Mammary epithelial cell (primary cell): ENCODE measurements at regions of chr18 and their contacts with region 1.

Region 1: DNA sequence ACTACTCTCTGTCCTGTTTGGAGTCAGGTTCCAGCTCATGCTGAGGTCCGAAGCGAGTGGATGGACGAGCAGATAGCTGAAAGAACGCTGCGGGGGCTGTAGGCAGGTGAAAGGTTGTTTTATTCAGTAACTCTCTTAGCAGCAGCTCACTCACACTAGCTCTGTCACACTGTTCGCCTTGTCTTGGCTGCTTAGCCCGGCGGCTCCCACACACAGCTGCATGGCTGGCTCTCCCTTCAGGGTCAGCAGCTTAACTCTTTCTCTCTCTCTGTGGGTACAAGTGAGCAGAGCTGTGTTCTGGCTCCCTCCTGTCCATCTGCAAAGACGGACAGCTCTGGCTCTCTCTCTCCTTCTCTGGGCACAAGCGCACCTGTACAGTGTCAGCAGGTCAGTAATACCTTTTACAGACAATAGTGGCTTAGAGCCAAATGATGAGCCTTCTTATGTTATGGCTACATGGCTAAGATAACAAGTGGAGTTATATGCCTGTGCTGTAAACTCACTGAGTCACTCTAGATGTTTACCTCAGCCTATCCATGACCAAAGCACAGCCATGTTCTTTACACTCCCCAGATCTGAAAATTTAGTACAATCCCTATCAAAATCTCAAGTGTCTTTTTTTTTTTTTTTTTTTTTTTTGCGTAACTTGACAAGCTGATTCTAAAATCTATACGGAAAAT is 149.3 kb downstream of the GALNT1 start:
- DNase-seq: no peak
- H3K4me3 ChIP-seq: peak overlapping the region; percentile 25 to 43 (median 27)
- H3K27ac ChIP-seq: no peak overlapping the region
- H3K4me1 ChIP-seq: no peaks in the 10 kb centered on the region
- H3K27me3 ChIP-seq: no peaks in the 10 kb centered on the region
- CTCF ChIP-seq: no peak

Region 2: GRCh38 chr18:35386600-35387351 is 344.1 kb before region 1 on chr18:
- CTCF ChIA-PET with region 1: no interaction called
- dilution Hi-C with region 1: no loop called
- in situ Hi-C with region 1: loop called in 1 of 2 experiments (anchors 25 kb)
- intact Hi-C with region 1: no loop called
- DNase-seq: peak; percentile 61
- H3K4me3 ChIP-seq: no peak overlapping the region
- H3K27ac ChIP-seq: no peak overlapping the region
- H3K4me1 ChIP-seq: no peaks in the 10 kb centered on the region
- H3K27me3 ChIP-seq: no peaks in the 10 kb centered on the region
- CTCF ChIP-seq: peak; percentile 92 to 96

Region 3: GRCh38 chr18:35747894-35748472 is 17.2 kb after region 1 on chr18:
- CTCF ChIA-PET with region 1: no interaction called
- dilution Hi-C with region 1: no loop called
- in situ Hi-C with region 1: no loop called
- intact Hi-C with region 1: loop called (anchors 2 kb)
- DNase-seq: no peak
- H3K4me3 ChIP-seq: no peak overlapping the region
- H3K27ac ChIP-seq: no peak overlapping the region
- H3K4me1 ChIP-seq: peaks cover 40% of the 10 kb centered on the region
- H3K27me3 ChIP-seq: no peaks in the 10 kb centered on the region
- CTCF ChIP-seq: no peak

Region 4: GRCh38 chr18:35777042-35777441 is 46.2 kb after region 1 on chr18:
- CTCF ChIA-PET with region 1: interaction called, 13 read pairs
- dilution Hi-C with region 1: no loop called
- in situ Hi-C with region 1: no loop called
- intact Hi-C with region 1: no loop called
- DNase-seq: no peak
- H3K4me3 ChIP-seq: no peak overlapping the region
- H3K27ac ChIP-seq: no peak overlapping the region
- H3K4me1 ChIP-seq: no peaks in the 10 kb centered on the region
- H3K27me3 ChIP-seq: no peaks in the 10 kb centered on the region
- CTCF ChIP-seq: no peak